ENCODE measurements at regions of chr1 and their contacts with region 1.

Region 1: GRCh38 chr1:182446033-182446669 is 3.8 kb upstream of the RGSL1 start:
- DNase-seq: peak; percentile 40
- ATAC-seq: peak; percentile 93
- H3K4me3 ChIP-seq: no peak overlapping the region
- H3K27ac ChIP-seq: no peak overlapping the region
- H3K4me1 ChIP-seq: no peaks in the 10 kb centered on the region
- H3K27me3 ChIP-seq: no peaks in the 10 kb centered on the region
- CTCF ChIP-seq: peak; percentile 63
- POLR2A ChIP-seq: no peak
- RAD21 ChIP-seq: peak; percentile 53

Region 2: DNA sequence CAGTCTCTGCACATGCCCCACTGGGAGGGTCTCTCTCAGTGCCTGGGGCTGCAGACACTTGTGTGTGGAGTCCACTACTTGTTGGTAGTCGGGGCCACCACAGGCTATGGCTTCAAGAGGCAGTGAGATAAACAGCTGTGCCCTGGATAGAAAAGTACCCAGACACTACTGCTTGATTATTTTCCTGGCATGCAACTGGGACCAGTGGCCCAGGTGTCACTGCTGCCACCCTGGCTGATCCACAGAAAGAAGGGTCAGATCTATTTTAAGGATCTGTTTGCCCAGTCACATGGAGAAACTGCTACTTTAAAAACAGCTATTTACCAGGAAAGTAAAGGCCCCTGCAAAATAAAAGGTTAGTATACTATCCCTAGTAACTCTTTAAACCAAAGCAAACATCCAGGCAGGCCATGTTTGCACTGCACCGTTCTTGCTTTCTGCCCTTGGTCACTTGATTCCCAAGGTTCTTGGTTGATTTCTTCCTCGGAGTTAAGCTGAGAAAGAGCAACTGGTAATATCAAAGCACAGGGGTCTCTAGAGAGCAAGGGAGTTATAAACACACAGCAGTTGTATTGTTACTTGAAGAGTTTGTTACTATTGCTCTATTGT is 154.5 kb before region 1 on chr1:
- CTCF ChIA-PET with region 1: no interaction called
- POLR2A ChIA-PET with region 1: no interaction called
- dilution Hi-C with region 1: no loop called
- in situ Hi-C with region 1: no loop called
- intact Hi-C with region 1: no loop called
- DNase-seq: no peak
- ATAC-seq: no peak
- H3K4me3 ChIP-seq: no peak overlapping the region
- H3K27ac ChIP-seq: no peak overlapping the region
- H3K4me1 ChIP-seq: peaks cover 2% of the 10 kb centered on the region; the same call in 1 of the 2 replicates
- H3K27me3 ChIP-seq: no peaks in the 10 kb centered on the region; the same call in 1 of the 2 replicates
- CTCF ChIP-seq: no peak
- POLR2A ChIP-seq: no peak
- RAD21 ChIP-seq: no peak

Region 3: GRCh38 chr1:182595641-182596240 is 149.6 kb after region 1 on chr1:
- CTCF ChIA-PET with region 1: no interaction called
- POLR2A ChIA-PET with region 1: no interaction called
- dilution Hi-C with region 1: no loop called
- in situ Hi-C with region 1: no loop called
- intact Hi-C with region 1: loop called (anchors 2 kb)
- DNase-seq: peak; percentile 69
- ATAC-seq: peak; percentile 92
- H3K4me3 ChIP-seq: no peak overlapping the region
- H3K27ac ChIP-seq: no peak overlapping the region
- H3K4me1 ChIP-seq: no peaks in the 10 kb centered on the region; the same call in 1 of the 2 replicates
- H3K27me3 ChIP-seq: peaks cover 12% of the 10 kb centered on the region; the same call in 1 of the 2 replicates
- CTCF ChIP-seq: peak; percentile 84
- POLR2A ChIP-seq: no peak
- RAD21 ChIP-seq: peak; percentile 67

Region 4: DNA sequence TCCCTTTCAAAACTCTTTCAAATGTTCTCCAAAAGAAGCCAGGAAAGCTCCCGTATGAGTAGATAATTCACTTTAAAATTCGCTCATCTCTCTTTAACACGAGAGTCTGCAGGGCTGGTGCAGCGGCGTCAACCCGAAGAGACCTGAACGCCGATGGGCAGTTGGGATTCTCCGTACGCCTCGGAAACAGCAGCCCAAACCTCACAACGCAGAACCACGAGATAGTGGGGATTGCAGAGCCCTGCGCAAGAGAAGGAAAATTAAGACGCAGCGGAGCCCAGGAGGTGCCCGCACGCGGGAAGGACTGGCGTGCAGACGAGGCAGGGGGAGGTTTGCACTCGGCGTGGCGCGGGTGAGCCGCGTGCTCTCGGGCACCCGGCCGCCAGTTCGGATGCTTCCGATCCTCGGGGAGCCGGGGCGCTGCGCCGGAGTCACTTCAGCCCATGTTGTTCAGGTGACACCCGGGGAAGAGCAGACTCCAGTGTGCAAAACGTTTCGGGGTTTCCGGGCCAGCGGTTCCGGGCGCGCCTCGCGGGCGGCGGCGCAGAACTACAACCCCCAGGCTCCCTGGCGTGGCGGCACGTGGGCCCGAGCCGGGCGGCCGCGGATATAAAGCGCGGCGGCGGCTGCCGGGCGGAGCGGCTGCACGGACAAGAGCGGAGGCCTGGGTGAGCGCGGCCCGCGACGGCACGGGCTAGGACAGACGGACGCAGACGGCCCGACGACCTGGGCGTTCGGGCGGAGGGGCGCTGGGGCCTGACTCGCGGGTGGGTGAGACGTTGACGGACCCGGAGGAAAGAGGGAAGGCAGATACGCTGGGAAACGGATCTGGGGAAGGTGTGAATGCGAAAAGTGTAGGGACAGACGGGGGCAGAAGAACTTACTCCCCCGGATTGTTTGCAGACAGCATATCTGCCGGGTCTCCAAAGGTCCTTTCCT is 343.3 kb after region 1 on chr1 and contains the start of gene NPL:
- CTCF ChIA-PET with region 1: interaction called, 3 read pairs
- POLR2A ChIA-PET with region 1: no interaction called
- dilution Hi-C with region 1: no loop called
- in situ Hi-C with region 1: loop called (anchors 10 kb)
- intact Hi-C with region 1: loop called (anchors 1 kb)
- DNase-seq: peak; percentile 50
- ATAC-seq: peak; percentile 96
- H3K4me3 ChIP-seq: peak within 1 kb of the TSS; percentile 79
- H3K27ac ChIP-seq: no peak within 1 kb of the TSS
- H3K4me1 ChIP-seq: no peaks in the 10 kb centered on the region
- H3K27me3 ChIP-seq: peaks cover 35% of the 10 kb centered on the region
- CTCF ChIP-seq: no peak
- POLR2A ChIP-seq: 0 out of 2 replicates have a peak, but pooled peaks have one; percentile 37
- RAD21 ChIP-seq: no peak
- total RNA-seq, gene NPL: 0.36 and 0.83 TPM in 2 replicates